AG04449 (cell line): ENCODE measurements at regions of chr17 and their contacts with region 1.

Region 1: DNA sequence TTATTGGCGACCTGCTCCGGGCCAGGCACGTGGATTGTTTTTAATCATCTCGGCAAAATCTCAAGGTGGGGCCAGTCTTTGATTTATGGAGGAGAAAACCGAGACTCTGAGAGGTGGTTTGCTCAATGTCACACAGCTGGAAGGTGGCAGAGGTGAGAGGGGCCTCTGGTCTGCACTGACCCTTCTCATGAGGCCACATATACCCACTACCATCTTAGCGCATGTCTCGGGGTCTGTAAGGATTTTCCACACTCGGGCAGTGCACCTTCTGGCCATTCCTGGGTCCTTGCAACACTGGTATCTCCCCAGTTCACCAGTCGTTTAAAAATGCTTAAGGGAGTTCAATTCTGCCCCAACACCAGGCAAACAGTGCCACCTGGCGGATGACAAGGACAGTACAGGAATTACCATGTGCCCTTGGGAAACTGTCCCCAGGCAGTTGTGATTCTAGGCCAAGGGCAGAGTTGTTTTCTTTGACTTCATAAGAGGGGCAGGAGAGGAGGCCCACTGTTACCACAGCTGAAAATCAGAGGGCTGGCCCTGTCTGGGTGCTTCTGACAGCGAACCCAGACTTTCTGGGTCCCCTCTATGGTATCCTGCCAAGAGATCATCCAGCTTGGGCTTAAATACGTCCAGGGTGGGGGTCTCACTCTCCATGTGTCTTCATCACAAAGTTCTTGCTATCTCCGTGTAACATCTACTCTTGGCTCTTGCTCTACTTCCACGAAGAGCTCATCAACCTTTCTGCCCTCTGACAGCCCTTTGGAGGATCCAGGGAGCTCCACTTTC is 39.4 kb upstream of the RAI1 start:
- DNase-seq: peak; percentile 19
- H3K4me3 ChIP-seq: no peak overlapping the region
- CTCF ChIP-seq: peak; percentile 85

Region 2: GRCh38 chr17:17511881-17512858 is 129.6 kb before region 1 on chr17:
- CTCF ChIA-PET with region 1: interaction called, 13 read pairs
- POLR2A ChIA-PET with region 1: no interaction called
- DNase-seq: peak; percentile 75
- H3K4me3 ChIP-seq: no peak overlapping the region
- CTCF ChIP-seq: peak; percentile 10

Region 3: DNA sequence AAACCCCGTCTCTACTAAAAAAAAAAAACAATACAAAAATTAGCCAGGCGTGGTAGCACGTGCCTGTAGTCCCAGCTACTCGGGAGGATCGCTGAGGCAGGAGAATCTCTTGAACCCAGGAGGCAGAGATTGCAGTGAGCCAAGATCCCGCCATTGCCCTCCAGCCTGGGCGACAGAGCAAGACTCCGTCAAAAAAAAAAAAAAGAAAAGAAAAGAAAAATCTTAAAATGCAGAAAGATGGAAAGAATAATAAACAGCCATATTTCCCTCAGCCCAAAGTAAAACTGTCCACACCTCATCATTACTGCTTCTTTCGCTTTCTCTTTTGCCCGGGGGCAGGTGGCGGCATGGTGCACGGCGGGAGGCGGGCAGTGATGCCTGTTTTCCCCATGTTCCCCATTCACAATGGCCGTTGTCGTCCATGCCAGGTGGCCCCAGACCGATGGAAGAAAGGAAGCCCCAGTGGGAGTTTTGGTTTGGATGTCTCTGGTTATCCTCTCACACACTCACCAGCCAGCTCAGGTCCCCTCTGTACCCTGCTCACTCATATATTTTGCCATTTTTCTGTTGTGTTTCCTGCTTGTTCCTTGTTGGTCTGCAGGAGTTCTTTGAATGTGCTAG is 13.3 kb before region 1 on chr17:
- CTCF ChIA-PET with region 1: interaction called, 22 read pairs
- POLR2A ChIA-PET with region 1: no interaction called
- DNase-seq: no peak
- H3K4me3 ChIP-seq: no peak overlapping the region; the same call in 1 of the 2 replicates
- CTCF ChIP-seq: no peak